ENCODE measurements at regions of chr6 and their contacts with region 1.

Region 1: DNA sequence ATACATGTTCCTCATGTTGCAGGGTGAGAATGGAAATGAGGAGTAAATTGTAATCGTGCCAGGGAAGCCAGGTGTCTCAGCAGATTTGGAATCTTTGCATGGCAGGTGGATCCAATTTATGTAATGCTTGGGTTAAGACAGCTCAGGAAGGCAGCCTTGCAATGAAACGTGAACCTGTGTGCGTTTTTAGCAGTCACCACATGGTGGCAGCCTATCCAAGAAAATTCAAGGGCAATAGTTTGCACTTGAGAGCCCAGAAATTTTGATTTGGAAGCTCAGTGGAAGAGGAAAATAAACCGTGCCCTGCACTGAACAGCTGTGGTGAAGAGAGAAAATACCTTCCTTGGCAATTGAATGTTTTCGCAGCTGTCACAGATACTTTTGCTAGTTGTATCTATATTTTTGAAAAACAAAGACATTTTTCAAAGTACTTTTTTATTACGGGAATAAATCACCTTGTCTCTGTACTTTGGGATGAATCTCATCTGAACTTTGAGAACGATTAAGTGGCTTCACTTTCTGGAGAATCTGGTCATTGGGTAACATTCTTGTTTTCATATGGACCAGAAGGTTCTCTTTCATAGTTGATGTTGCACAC is 26.5 kb downstream of the MTHFD1L start:
- DNase-seq: peak in 5 of 6 donors; percentile 39 to 79 (median 49)
- ATAC-seq: peak; percentile 73 to 96 (median 94)
- H3K4me3 ChIP-seq: no peak overlapping the region
- H3K27ac ChIP-seq: no peak overlapping the region
- H3K4me1 ChIP-seq: no peaks in the 10 kb centered on the region
- H3K27me3 ChIP-seq: no peaks in the 10 kb centered on the region
- CTCF ChIP-seq: peak; percentile 67 to 80 (median 78)

Region 2: DNA sequence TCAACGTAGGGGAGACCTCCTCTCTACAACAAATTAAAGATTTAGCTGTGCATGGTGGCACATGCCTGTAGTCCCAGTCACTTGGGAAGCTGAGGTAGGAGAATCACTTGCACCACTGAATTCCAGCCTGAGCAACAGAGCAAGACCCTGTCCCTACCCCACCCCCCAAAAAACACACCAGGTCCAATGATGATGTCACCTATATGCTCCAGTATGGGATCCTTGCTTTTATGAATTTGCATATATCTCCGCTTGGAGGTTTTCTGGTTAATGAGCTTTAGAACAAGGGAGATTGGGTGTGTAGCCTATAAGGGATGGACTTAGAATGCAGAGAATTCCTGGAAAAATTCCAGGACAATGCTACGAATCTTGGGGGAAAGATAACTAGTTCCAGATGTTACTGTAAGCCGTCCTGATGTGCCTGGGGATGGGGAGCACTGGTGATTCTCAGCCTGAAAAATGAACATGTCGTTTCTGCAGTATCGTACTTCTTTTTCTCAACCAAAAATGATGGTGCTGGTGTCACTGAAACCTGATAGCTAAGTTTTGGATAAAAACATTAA is 438.2 kb after region 1 on chr6:
- intact Hi-C with region 1: loop called (anchors 5 to 10 kb)
- DNase-seq: no peak
- ATAC-seq: no peak
- H3K4me3 ChIP-seq: no peak overlapping the region
- H3K27ac ChIP-seq: no peak overlapping the region
- H3K4me1 ChIP-seq: no peaks in the 10 kb centered on the region
- H3K27me3 ChIP-seq: no peaks in the 10 kb centered on the region
- CTCF ChIP-seq: no peak

Region 3: DNA sequence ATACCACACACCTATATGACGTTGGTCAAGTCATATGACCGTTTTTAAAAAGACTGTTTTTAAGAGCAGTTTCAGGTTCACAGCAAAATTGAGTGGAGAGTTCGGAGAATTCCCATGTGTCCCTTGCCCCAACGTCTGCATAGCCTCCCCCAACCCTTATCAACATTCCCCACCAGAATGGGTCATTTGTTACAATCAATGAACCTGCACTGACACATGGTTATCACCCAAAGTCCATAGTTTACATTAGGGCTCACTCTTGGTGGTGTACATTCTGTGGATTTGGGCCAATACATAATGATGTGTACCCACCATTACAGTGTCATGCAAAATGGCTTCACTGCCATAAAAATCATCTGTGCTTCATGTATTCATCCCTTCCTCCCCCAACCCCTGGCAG is 447.4 kb after region 1 on chr6:
- intact Hi-C with region 1: loop called (anchors 5 to 10 kb)
- DNase-seq: no peak
- ATAC-seq: no peak
- H3K4me3 ChIP-seq: no peak overlapping the region
- H3K27ac ChIP-seq: no peak overlapping the region
- H3K4me1 ChIP-seq: no peaks in the 10 kb centered on the region
- H3K27me3 ChIP-seq: no peaks in the 10 kb centered on the region
- CTCF ChIP-seq: no peak